Caco-2 (cell line): ENCODE measurements at regions of chr7 and their contacts with region 1.

Region 1: GRCh38 chr7:117715784-117716445 is 157.3 kb downstream of the CTTNBP2 start:
- DNase-seq: peak; percentile 57 to 75
- H3K4me3 ChIP-seq: no peak overlapping the region
- H3K4me3 Mint-ChIP-seq: no peak overlapping the region
- H3K27ac Mint-ChIP-seq: no peak overlapping the region
- H3K4me1 ChIP-seq: peaks cover 14% of the 10 kb centered on the region
- H3K4me1 Mint-ChIP-seq: peaks cover 31% of the 10 kb centered on the region
- H3K27me3 ChIP-seq: no peaks in the 10 kb centered on the region
- H3K27me3 Mint-ChIP-seq: no peaks in the 10 kb centered on the region
- CTCF ChIP-seq: peak; percentile 69 to 71

Region 2: GRCh38 chr7:117458977-117459583 is 256.8 kb before region 1 on chr7:
- CTCF ChIA-PET with region 1: interaction called, 20 read pairs
- POLR2A ChIA-PET with region 1: no interaction called
- intact Hi-C with region 1: loop called (anchors 1 kb)
- DNase-seq: peak in 1 of 2 experiments; percentile 30
- H3K4me3 ChIP-seq: no peak overlapping the region
- H3K4me3 Mint-ChIP-seq: no peak overlapping the region
- H3K27ac Mint-ChIP-seq: no peak overlapping the region
- H3K4me1 ChIP-seq: 0 out of 2 replicates have a peak, but pooled peaks cover 2% of the 10 kb centered on the region
- H3K4me1 Mint-ChIP-seq: no peaks in the 10 kb centered on the region
- H3K27me3 ChIP-seq: no peaks in the 10 kb centered on the region
- H3K27me3 Mint-ChIP-seq: no peaks in the 10 kb centered on the region
- CTCF ChIP-seq: peak; percentile 65 to 71

Region 3: DNA sequence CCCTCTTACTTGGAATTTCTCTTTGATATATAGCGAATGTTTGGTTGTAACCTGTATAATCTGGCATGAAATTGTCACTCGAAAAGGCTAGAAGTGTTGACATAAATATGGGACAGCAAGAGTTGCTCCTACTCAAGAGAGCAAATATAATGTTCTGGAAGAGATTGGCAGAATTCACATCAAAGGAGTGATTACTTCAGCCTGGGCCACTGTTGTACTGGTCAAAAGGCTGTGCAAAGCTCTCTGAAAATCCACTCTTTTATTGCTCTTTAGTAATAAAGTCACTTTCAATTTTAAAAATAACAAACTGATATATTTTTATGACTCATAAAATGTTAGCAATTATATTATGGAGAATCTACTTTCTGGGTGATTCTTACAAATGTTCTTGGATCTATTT is 177.9 kb before region 1 on chr7:
- CTCF ChIA-PET with region 1: no interaction called
- POLR2A ChIA-PET with region 1: no interaction called
- intact Hi-C with region 1: loop called (anchors 5 kb)
- DNase-seq: no peak
- H3K4me3 ChIP-seq: no peak overlapping the region
- H3K4me3 Mint-ChIP-seq: no peak overlapping the region
- H3K27ac Mint-ChIP-seq: peak overlapping the region; percentile 65
- H3K4me1 ChIP-seq: peaks cover 16% of the 10 kb centered on the region
- H3K4me1 Mint-ChIP-seq: peaks cover 12% of the 10 kb centered on the region
- H3K27me3 ChIP-seq: no peaks in the 10 kb centered on the region
- H3K27me3 Mint-ChIP-seq: no peaks in the 10 kb centered on the region
- CTCF ChIP-seq: no peak

Region 4: DNA sequence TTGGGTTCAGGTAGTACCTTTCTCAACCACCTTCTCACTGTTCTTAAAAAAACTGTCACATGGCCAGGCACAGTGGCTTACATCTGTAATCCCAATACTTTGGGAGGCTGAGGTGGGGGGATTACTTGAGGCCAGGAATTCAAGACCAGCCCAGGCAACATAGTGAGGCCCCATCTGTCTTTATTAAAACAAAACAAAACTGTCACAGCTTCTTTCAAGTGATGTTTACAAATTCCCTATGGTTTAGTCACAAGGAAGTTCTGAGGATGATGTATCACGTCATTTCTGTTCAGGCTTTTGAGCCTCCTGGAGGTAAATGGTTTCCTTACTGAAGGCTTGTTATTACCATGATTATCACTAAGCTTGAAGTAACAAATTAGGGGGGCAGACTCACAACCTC is 49.9 kb before region 1 on chr7:
- CTCF ChIA-PET with region 1: interaction called, 6 read pairs
- POLR2A ChIA-PET with region 1: no interaction called
- intact Hi-C with region 1: loop called (anchors 1 kb)
- DNase-seq: peak; percentile 65 to 66
- H3K4me3 ChIP-seq: no peak overlapping the region
- H3K4me3 Mint-ChIP-seq: peak overlapping the region; percentile 24
- H3K27ac Mint-ChIP-seq: peak overlapping the region; percentile 95
- H3K4me1 ChIP-seq: peaks cover 59% of the 10 kb centered on the region
- H3K4me1 Mint-ChIP-seq: peaks cover 59% of the 10 kb centered on the region
- H3K27me3 ChIP-seq: no peaks in the 10 kb centered on the region
- H3K27me3 Mint-ChIP-seq: no peaks in the 10 kb centered on the region
- CTCF ChIP-seq: no peak

Region 5: DNA sequence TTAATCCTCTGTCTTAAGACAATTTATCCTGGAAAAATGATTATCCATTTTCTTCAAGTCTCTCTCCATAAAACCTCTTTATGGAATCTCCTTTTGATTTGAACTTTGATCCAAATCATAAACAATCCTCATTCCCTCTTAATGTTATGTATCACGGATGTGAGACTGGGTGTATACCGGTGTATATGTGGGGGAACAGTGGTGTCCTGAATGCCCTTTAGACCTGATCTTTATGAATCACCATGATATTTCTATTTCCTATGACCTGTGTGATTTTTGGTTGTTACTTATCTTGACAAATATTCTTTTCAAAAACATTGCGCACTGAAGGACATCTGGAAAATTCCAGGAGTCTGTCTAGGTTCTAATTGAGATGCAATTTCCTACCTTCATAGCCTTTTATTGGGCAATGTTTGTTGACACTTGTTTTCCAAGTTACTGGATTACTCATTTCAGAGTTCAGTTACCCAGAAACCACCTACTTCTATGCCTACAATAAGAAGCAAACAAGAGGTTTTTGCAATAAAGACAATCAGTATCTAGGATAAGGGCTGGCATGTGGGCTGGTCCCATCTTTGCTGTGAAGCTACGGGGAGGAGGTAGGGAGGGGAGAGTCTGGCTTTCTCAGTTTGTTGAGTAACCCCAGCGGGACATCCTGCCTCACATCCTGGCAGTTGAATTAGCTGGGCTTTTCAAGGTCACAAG is 33.1 kb before region 1 on chr7:
- CTCF ChIA-PET with region 1: no interaction called
- POLR2A ChIA-PET with region 1: interaction called, 3 read pairs
- intact Hi-C with region 1: loop called (anchors 1 kb)
- DNase-seq: peak; percentile 85 to 89
- H3K4me3 ChIP-seq: no peak overlapping the region
- H3K4me3 Mint-ChIP-seq: no peak overlapping the region
- H3K27ac Mint-ChIP-seq: peak overlapping the region; percentile 67
- H3K4me1 ChIP-seq: peaks cover 54% of the 10 kb centered on the region
- H3K4me1 Mint-ChIP-seq: peaks cover 17% of the 10 kb centered on the region
- H3K27me3 ChIP-seq: no peaks in the 10 kb centered on the region
- H3K27me3 Mint-ChIP-seq: no peaks in the 10 kb centered on the region
- CTCF ChIP-seq: no peak

Region 6: DNA sequence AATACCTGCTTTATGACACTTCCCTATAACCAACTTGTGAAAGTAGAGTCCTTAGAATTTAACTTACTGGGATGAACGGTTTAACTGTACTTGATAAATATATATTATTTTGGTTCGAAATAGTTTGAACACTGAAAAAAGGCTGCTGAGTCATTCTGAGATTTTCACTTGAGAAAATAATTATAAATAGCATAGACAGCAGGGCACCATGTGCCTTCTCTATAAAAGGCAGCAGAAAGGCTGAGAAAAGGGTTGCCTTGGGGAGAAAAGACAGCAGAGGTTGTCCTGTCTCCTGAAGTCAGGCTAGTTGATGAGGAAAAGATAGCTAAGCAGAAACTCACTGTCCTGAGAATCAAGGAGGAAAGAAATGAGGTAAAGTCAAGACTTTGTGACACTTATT is 64.9 kb after region 1 on chr7:
- CTCF ChIA-PET with region 1: no interaction called
- POLR2A ChIA-PET with region 1: no interaction called
- intact Hi-C with region 1: no loop called
- DNase-seq: no peak
- H3K4me3 ChIP-seq: no peak overlapping the region
- H3K4me3 Mint-ChIP-seq: no peak overlapping the region
- H3K27ac Mint-ChIP-seq: no peak overlapping the region
- H3K4me1 ChIP-seq: peaks cover 8% of the 10 kb centered on the region
- H3K4me1 Mint-ChIP-seq: peaks cover 17% of the 10 kb centered on the region
- H3K27me3 ChIP-seq: no peaks in the 10 kb centered on the region
- H3K27me3 Mint-ChIP-seq: no peaks in the 10 kb centered on the region
- CTCF ChIP-seq: no peak